Esophagus muscularis mucosa (tissue), 4 donors: ENCODE measurements at regions of chr3 and their contacts with region 1.

Region 1: DNA sequence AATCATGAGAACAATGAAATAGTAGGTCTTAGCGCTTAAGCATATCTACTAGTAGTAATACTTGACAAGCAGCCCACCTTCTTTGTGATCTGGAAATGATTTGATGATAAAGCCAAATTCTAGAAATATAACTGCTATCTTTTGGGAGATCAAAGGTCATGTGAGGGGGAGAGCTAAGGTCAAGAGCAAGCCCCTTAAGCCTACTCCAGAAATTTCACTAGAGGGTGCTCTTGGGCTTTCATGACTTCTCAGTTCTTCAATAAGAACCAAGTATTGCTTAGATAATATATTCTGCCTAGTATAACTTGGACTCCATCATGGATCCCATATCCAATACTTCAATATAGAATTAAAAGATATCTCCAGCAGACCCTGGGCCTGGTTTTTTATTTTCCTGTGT is 319.6 kb downstream of the ZBTB20 start:
- DNase-seq: no peak
- H3K4me3 ChIP-seq: no peak overlapping the region
- H3K27ac ChIP-seq: no peak overlapping the region
- H3K4me1 ChIP-seq: peaks cover 0 to 10% (median 0%) of the 10 kb centered on the region in 4 donors
- H3K27me3 ChIP-seq: no peaks in the 10 kb centered on the region
- CTCF ChIP-seq: peak; percentile 59 to 73 (median 62)
- EP300 ChIP-seq: no peak
- POLR2A ChIP-seq: no peak

Region 2: DNA sequence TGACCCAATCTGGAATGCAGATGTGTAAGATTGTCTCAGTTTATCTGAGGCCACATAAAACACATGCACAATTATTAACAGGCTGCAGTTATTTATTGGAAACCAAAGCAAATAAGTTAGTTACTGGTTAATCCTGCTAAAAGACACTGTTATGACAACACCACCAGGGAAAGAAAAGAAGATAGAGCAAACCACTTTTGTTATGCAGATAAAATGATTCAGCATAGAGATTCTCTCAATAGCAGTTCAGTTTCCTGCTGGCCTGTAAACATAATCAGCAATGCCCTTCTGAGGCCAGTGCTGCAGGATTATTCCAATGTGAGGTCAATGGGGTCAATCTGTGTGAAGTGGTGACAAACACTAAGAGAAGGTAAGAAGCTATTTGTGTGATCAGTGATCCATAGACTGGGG is 75.2 kb after region 1 on chr3:
- intact Hi-C with region 1: no loop called
- DNase-seq: no peak
- H3K4me3 ChIP-seq: no peak overlapping the region
- H3K27ac ChIP-seq: peak overlapping the region in 3 of 4 donors; percentile 6 to 44 (median 12)
- H3K4me1 ChIP-seq: peaks cover 12 to 44% (median 42%) of the 10 kb centered on the region in 4 donors
- H3K27me3 ChIP-seq: no peaks in the 10 kb centered on the region
- CTCF ChIP-seq: no peak
- EP300 ChIP-seq: no peak
- POLR2A ChIP-seq: no peak

Region 3: DNA sequence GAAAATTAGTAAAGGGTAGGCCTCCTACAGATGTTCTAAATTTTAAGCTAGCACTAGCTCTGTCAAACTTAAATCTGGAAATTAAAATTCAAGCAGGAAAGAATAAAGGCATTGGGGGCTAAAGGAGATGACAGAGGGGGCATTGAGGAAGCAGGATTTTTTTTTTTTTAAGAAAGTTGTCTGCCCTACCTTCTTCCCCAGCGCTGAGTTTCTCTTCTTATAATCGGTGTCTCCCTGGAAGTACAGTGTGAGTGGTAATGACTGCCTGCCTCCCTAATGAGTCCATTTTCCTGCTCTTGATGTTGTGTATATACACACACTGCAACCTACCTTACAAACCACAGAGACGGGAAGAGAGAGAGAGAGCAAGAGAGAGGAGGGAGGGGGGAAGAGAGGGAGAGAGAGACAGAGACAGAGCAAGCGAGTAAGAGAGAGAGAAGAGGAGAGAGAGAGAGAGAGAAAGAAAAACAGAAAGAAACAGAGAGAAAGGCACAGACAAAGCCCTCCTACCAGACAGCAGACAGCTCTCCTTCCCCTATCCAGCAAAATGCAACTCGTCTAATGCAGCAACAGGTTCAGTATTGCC is 272.6 kb after region 1 on chr3:
- intact Hi-C with region 1: loop called (anchors 5 kb)
- DNase-seq: no peak
- H3K4me3 ChIP-seq: peak overlapping the region; percentile 42 to 46 (median 46)
- H3K27ac ChIP-seq: peak overlapping the region; percentile 43 to 70 (median 67)
- H3K4me1 ChIP-seq: peaks cover 23 to 47% (median 42%) of the 10 kb centered on the region in 4 donors
- H3K27me3 ChIP-seq: no peaks in the 10 kb centered on the region
- CTCF ChIP-seq: no peak
- EP300 ChIP-seq: no peak
- POLR2A ChIP-seq: no peak

Region 4: DNA sequence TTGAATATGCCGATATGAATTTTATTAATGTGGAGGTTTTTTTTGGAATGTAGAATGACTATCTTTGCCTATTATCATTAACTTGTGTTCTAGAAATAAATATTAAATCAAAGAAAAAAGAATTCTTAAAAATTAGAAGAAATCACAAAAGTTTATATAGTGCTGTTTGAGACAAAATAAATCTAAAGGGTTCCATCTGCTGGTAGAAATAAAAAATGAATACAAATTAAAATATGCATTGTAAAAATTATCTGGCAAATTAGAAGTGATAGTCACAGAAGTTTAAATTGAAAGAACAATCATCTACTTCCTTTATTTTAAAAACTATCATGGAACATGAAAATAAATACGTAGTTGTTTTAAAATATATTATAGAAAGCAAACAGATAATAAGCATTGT is 342.3 kb after region 1 on chr3:
- intact Hi-C with region 1: loop called (anchors 10 kb)
- DNase-seq: no peak
- H3K4me3 ChIP-seq: no peak overlapping the region
- H3K27ac ChIP-seq: no peak overlapping the region
- H3K4me1 ChIP-seq: no peaks in the 10 kb centered on the region
- H3K27me3 ChIP-seq: no peaks in the 10 kb centered on the region
- CTCF ChIP-seq: peak in 2 of 3 experiments; percentile 41 to 45
- EP300 ChIP-seq: no peak
- POLR2A ChIP-seq: no peak